ENCODE measurements at regions of chr18 and their contacts with region 1.

Region 1: DNA sequence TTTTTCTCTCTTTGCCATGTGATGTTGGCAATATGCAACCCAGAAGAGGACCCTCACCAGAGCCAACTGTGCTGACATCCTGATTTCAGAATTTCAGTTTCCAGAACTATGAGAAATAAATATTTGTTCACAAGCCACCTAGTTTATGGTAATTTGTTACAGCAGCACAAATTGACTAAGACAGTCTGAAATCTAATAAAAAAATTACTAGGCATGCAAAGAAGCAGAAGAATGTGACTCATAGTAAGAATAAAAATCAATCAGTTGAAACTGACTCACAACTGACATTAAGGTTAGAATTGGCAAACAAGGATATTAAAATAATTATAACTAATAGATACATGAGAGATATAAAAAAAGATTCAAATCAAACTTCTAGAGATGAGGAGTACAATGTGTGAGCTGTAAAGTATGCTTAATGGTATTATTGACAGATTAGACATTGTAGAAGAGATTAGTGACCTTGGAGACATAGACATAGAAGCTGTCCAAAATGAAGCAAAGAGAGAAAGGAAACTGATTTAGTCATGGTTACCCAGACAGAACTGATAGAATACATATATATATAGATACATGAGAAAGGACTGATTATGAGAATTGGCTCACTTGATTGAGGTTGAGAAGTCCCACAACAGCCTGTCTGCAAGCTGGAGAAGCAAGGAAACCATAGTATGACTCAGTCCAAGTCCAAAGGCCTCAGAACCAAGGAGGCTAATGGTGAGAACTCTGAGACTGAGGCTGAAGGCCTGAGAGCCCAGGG is 27.8 kb upstream of the TTC39C start:
- DNase-seq: peak; percentile 23
- ATAC-seq: peak; percentile 84
- H3K4me3 Mint-ChIP-seq: no peak overlapping the region
- H3K27ac Mint-ChIP-seq: no peak overlapping the region
- H3K4me1 Mint-ChIP-seq: peaks cover 50% of the 10 kb centered on the region
- H3K27me3 Mint-ChIP-seq: peaks cover 4% of the 10 kb centered on the region

Region 2: GRCh38 chr18:23943104-23943503 is 43.7 kb before region 1 on chr18:
- CTCF ChIA-PET with region 1: no interaction called
- POLR2A ChIA-PET with region 1: no interaction called
- intact Hi-C with region 1: no loop called
- DNase-seq: peak; percentile 67
- ATAC-seq: peak; percentile 91
- H3K4me3 Mint-ChIP-seq: no peak overlapping the region
- H3K27ac Mint-ChIP-seq: no peak overlapping the region
- H3K4me1 Mint-ChIP-seq: peaks cover 37% of the 10 kb centered on the region
- H3K27me3 Mint-ChIP-seq: peaks cover 16% of the 10 kb centered on the region

Region 3: DNA sequence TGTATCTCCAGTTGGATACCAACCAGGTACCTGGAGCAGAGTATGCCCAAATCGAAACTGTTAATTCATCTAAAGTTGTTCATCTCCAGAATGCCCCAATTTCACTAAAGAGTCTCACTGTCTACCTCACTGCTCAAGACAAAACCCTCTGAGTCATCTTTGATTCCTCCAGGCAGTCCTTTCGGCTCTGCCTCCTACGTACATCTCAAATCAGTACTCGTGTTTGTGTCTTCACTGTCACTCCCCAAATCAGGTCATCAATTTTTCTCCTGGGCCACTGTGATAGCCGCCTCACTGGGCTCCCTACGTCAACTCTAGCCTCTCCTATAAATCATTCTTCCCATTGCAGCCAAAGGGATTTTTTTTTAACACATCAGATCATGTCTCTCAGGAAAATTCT is 14.4 kb before region 1 on chr18:
- CTCF ChIA-PET with region 1: interaction called, 3 read pairs
- POLR2A ChIA-PET with region 1: no interaction called
- intact Hi-C with region 1: loop called (anchors 1 to 2 kb)
- DNase-seq: peak; percentile 55
- ATAC-seq: peak; percentile 92
- H3K4me3 Mint-ChIP-seq: no peak overlapping the region
- H3K27ac Mint-ChIP-seq: no peak overlapping the region
- H3K4me1 Mint-ChIP-seq: peaks cover 52% of the 10 kb centered on the region
- H3K27me3 Mint-ChIP-seq: no peaks in the 10 kb centered on the region

Region 4: GRCh38 chr18:24027156-24027827 is 40.5 kb after region 1 on chr18:
- CTCF ChIA-PET with region 1: no interaction called
- POLR2A ChIA-PET with region 1: no interaction called
- intact Hi-C with region 1: loop called in 1 of 2 experiments (anchors 1 kb)
- DNase-seq: no peak
- ATAC-seq: no peak
- H3K4me3 Mint-ChIP-seq: no peak overlapping the region
- H3K27ac Mint-ChIP-seq: no peak overlapping the region
- H3K4me1 Mint-ChIP-seq: peaks cover 86% of the 10 kb centered on the region
- H3K27me3 Mint-ChIP-seq: no peaks in the 10 kb centered on the region

Measured in activated CD4-positive, alpha-beta T cell treated with anti-CD3 and anti-CD28 coated beads for 36 hours (primary cell).